ENCODE measurements at regions of chr11 and their contacts with region 1.

Region 1: GRCh38 chr11:2298795-2299761 is 2.6 kb downstream of the C11orf21 start:
- DNase-seq: peak; percentile 61 to 65 (median 63)
- ATAC-seq: peak; percentile 41
- H3K4me3 ChIP-seq: no peak overlapping the region
- H3K27ac ChIP-seq: no peak overlapping the region
- H3K4me1 ChIP-seq: peaks cover 37 to 70% of the 10 kb centered on the region in 2 experiments
- H3K27me3 ChIP-seq: peaks cover 0 to 12% of the 10 kb centered on the region in 2 experiments; a peak in 2 of 5 replicates
- CTCF ChIP-seq: peak; percentile 61 to 69 (median 68)
- EP300 ChIP-seq: no peak
- POLR2A ChIP-seq: no peak
- RAD21 ChIP-seq: peak; percentile 46 to 73

Region 2: GRCh38 chr11:1854949-1855885 is 443.9 kb before region 1 on chr11:
- CTCF ChIA-PET with region 1: no interaction called
- POLR2A ChIA-PET with region 1: no interaction called
- in situ Hi-C with region 1: no loop called
- intact Hi-C with region 1: no loop called
- DNase-seq: peak in 2 of 4 experiments; percentile 38 to 45
- ATAC-seq: peak; percentile 52
- H3K4me3 ChIP-seq: no peak overlapping the region
- H3K27ac ChIP-seq: no peak overlapping the region
- H3K4me1 ChIP-seq: peaks cover 0 to 17% of the 10 kb centered on the region in 2 experiments; a peak in 2 of 5 replicates
- H3K27me3 ChIP-seq: peaks cover 24 to 78% of the 10 kb centered on the region in 2 experiments; a peak in 4 of 5 replicates
- CTCF ChIP-seq: peak; percentile 18 to 31 (median 21); a peak in 2 of 6 replicates
- EP300 ChIP-seq: no peak
- POLR2A ChIP-seq: no peak
- RAD21 ChIP-seq: 0 out of 4 replicates have a peak, but pooled peaks of 1 of the 2 experiments have one; percentile 18

Region 3: GRCh38 chr11:2196970-2197770 is 101.9 kb before region 1 on chr11:
- CTCF ChIA-PET with region 1: interaction called, 21 read pairs
- POLR2A ChIA-PET with region 1: no interaction called
- in situ Hi-C with region 1: loop called (anchors 5 kb)
- intact Hi-C with region 1: loop called (anchors 1 kb)
- DNase-seq: peak; percentile 82 to 86 (median 84)
- ATAC-seq: peak; percentile 93
- H3K4me3 ChIP-seq: no peak overlapping the region
- H3K27ac ChIP-seq: no peak overlapping the region
- H3K4me1 ChIP-seq: peaks cover 2 to 70% of the 10 kb centered on the region in 2 experiments; a peak in 3 of 5 replicates
- H3K27me3 ChIP-seq: peaks cover 0 to 32% of the 10 kb centered on the region in 2 experiments; a peak in 2 of 5 replicates
- CTCF ChIP-seq: peak; percentile 87 to 94 (median 93)
- EP300 ChIP-seq: no peak
- POLR2A ChIP-seq: no peak
- RAD21 ChIP-seq: peak; percentile 94 to 95

Region 4: DNA sequence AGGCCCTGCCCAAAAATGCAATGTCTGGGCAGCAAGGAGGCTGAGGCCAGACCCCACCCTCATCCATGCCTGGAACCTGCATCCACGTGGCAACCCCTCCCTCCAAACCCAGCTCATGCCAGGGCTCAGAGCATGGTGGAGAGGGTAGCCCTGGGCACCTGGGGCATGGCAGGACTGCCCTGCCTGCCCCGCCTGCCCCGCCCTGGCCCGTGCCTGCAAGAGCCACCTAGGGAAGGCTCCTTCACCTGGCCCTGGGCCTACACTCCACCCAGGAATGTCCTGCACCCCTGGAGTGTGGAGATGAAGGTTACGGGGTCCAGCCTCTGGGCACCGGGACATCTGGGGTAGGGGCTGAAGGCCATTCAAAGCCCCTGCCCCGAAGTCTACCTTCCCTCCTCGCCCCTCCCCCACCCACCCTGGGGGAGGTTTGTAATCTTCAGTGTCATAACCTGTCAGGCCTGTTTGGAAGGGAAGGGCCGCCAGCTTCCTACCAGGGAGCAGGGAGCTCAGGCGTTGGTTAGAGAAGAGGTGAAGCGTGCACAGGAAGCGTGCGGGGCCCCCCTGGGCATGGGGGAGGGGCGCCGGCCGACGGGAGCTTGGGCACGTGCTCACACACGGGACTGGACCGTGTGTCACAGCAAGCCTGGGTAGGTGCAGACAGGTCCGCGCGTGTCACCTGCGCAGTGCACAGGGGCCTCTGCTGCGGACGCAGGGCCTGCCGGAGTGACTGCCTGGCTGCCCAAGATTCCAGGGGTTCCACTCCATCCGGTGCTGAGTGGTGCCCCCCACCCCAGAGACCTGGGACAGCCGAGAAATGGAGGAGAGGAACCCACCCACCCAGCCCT is 96.8 kb before region 1 on chr11:
- CTCF ChIA-PET with region 1: interaction called, 21 read pairs
- POLR2A ChIA-PET with region 1: no interaction called
- in situ Hi-C with region 1: loop called (anchors 5 kb)
- intact Hi-C with region 1: loop called (anchors 1 kb)
- DNase-seq: peak in 1 of 4 experiments; percentile 36
- ATAC-seq: no peak; the same call in 2 of the 3 replicates
- H3K4me3 ChIP-seq: no peak overlapping the region
- H3K27ac ChIP-seq: no peak overlapping the region
- H3K4me1 ChIP-seq: peaks cover 0 to 55% of the 10 kb centered on the region in 2 experiments; a peak in 2 of 5 replicates
- H3K27me3 ChIP-seq: peaks cover 2 to 26% of the 10 kb centered on the region in 2 experiments; a peak in 4 of 5 replicates
- CTCF ChIP-seq: no peak
- EP300 ChIP-seq: no peak
- POLR2A ChIP-seq: no peak
- RAD21 ChIP-seq: no peak

Measured in K562 (cell line).